Activated T-helper 1 cell treated with anti-CD3 and anti-CD28 coated beads, Interleukin-12 subunit alpha, Interleukin-12 subunit beta, Interleukin-2, Interleukin-4 antibody, amounts not matched to agents 30 ng/mL and 10 ng/mL and 1 ng/mL, durations not matched to agents 14 hours and 24 hours and 36 hours (primary cell): ENCODE measurements at regions of chr1 and their contacts with region 1.

Region 1: GRCh38 chr1:203625628-203626019 is 1.0 kb upstream of the ATP2B4 start:
- DNase-seq: peak; percentile 55
- H3K4me3 Mint-ChIP-seq: peak overlapping the region; percentile 92
- H3K27ac Mint-ChIP-seq: peak overlapping the region; percentile 86
- H3K4me1 Mint-ChIP-seq: peaks cover 87% of the 10 kb centered on the region
- H3K27me3 Mint-ChIP-seq: no peaks in the 10 kb centered on the region

Region 2: GRCh38 chr1:203290261-203291089 is 335.1 kb before region 1 on chr1:
- intact Hi-C with region 1: loop called (anchors 2 kb)
- DNase-seq: peak; percentile 96
- H3K4me3 Mint-ChIP-seq: peak overlapping the region; percentile 83
- H3K27ac Mint-ChIP-seq: peak overlapping the region; percentile 99
- H3K4me1 Mint-ChIP-seq: peaks cover 89% of the 10 kb centered on the region
- H3K27me3 Mint-ChIP-seq: no peaks in the 10 kb centered on the region

Region 3: DNA sequence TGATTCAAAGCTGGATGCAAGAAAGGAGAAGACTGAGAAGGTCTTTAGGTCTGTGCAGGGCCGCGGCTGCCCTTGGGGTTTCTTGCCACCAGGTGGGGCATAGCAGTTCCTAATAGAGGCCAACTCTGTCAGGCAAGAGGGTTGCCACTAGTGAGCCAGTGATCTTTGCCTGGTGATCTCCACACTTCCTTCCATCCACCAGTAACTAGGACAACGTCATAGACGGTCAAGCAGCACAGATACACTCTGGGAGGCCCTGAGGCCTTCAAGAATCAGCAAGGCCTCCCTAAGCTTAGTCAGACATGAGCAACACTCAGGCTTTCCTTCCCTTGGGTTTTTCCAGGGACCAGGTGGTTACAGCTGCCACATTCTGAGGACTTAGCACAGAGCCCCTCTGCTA is 31.9 kb before region 1 on chr1:
- intact Hi-C with region 1: loop called (anchors 5 kb)
- DNase-seq: peak; percentile 47
- H3K4me3 Mint-ChIP-seq: no peak overlapping the region
- H3K27ac Mint-ChIP-seq: peak overlapping the region; percentile 26
- H3K4me1 Mint-ChIP-seq: peaks cover 29% of the 10 kb centered on the region
- H3K27me3 Mint-ChIP-seq: no peaks in the 10 kb centered on the region

Region 4: DNA sequence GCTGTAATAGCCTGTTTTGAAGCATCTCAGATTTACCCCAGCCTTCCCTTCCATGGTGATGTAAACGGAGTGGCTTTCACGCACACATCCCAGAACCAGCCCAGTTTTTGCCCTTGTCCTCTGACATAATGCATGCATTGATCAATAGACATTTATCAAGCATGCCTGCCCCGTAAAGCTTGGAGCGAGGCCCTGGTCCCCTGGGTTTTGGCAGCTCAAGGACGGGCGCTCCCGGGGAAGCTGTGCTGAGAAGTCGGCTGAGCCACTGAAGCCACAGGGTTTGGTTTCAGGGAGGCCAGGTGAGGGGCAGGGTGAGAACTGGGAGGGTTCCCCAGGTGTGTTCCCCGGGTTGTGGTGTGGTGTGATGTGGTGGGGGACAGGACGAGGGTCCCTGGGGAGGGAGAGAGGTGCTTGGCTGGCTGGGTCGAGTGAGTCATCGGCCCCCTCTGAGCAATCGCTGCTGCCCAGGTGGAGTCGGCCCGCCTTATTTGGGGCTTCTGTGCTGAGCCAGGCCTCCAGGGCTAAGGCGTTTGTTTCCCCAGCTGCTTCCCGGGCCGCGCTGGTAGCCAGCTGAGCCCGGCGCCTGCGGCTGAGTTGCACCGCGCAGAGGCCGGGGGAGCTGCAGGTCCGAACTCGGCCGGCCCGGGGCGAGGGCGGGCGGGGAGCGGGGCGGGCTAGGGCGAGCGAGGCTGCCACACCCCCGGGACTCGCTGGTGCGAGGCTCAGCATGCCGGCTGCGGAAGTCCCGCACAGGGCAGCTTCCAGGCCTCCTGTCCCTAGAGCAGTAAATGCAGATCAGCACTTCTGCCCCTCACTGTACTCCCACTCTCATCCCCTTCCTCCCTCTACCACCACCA is 24.6 kb after region 1 on chr1:
- intact Hi-C with region 1: loop called (anchors 1 kb)
- DNase-seq: peak; percentile 56
- H3K4me3 Mint-ChIP-seq: peak overlapping the region; percentile 77
- H3K27ac Mint-ChIP-seq: peak overlapping the region; percentile 98
- H3K4me1 Mint-ChIP-seq: peaks cover 78% of the 10 kb centered on the region
- H3K27me3 Mint-ChIP-seq: no peaks in the 10 kb centered on the region

Region 5: GRCh38 chr1:203702130-203702577 is 76.5 kb after region 1 on chr1:
- intact Hi-C with region 1: loop called (anchors 1 kb)
- DNase-seq: peak; percentile 25
- H3K4me3 Mint-ChIP-seq: no peak overlapping the region
- H3K27ac Mint-ChIP-seq: peak overlapping the region; percentile 79
- H3K4me1 Mint-ChIP-seq: peaks cover 19% of the 10 kb centered on the region
- H3K27me3 Mint-ChIP-seq: no peaks in the 10 kb centered on the region